Activated T-helper 1 cell treated with anti-CD3 and anti-CD28 coated beads, Interleukin-12 subunit alpha, Interleukin-12 subunit beta, Interleukin-2, Interleukin-4 antibody, amounts not matched to agents 30 ng/mL and 10 ng/mL and 1 ng/mL, durations not matched to agents 14 hours and 24 hours and 36 hours (primary cell): ENCODE measurements at regions of chr5 and their contacts with region 1.

Region 1: GRCh38 chr5:112976432-112977309 is at the start of gene DCP2:
- DNase-seq: peak; percentile 96
- H3K4me3 Mint-ChIP-seq: peak within 1 kb of the TSS; percentile 93
- H3K27ac Mint-ChIP-seq: peak within 1 kb of the TSS; percentile 93
- H3K4me1 Mint-ChIP-seq: peaks cover 32% of the 10 kb centered on the region
- H3K27me3 Mint-ChIP-seq: no peaks in the 10 kb centered on the region
- total RNA-seq, gene DCP2: 78.9 and 82.5 TPM in 2 replicates

Region 2: GRCh38 chr5:112860929-112861637 is 115.6 kb before region 1 on chr5 and contains the start of gene SRP19:
- intact Hi-C with region 1: loop called (anchors 1 kb)
- DNase-seq: peak; percentile 89
- H3K4me3 Mint-ChIP-seq: peak within 1 kb of the TSS; percentile 97
- H3K27ac Mint-ChIP-seq: peak within 1 kb of the TSS; percentile 96
- H3K4me1 Mint-ChIP-seq: peaks cover 27% of the 10 kb centered on the region
- H3K27me3 Mint-ChIP-seq: peaks cover 12% of the 10 kb centered on the region
- total RNA-seq, gene SRP19: 72.0 and 72.5 TPM in 2 replicates

Region 3: DNA sequence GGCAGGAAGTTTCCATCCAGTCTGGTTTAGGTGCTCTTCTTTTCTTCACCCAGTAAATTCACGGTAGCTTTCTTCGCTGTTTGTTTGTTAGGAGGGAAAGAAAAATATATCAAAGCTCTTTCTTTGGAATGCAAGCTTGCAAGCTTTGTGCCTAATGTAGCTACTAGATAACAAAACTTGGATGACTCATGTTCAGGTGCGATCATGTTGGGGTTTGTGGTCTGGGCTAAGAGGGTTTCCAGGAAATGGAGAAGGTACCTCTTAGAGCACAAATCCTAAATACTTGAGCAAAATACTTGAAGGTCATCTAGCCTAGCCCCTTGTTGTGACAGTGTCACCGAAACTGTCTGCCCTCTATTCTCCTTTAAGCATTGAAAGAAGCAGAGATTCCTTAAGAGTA is 97.9 kb before region 1 on chr5:
- intact Hi-C with region 1: loop called (anchors 2 kb)
- DNase-seq: peak; percentile 62
- H3K4me3 Mint-ChIP-seq: peak overlapping the region; percentile 31
- H3K27ac Mint-ChIP-seq: peak overlapping the region; percentile 54
- H3K4me1 Mint-ChIP-seq: peaks cover 42% of the 10 kb centered on the region
- H3K27me3 Mint-ChIP-seq: no peaks in the 10 kb centered on the region

Region 4: GRCh38 chr5:113022661-113023060 is 46.0 kb after region 1 on chr5:
- intact Hi-C with region 1: loop called (anchors 1 kb)
- DNase-seq: peak; percentile 27
- H3K4me3 Mint-ChIP-seq: peak overlapping the region; percentile 43
- H3K27ac Mint-ChIP-seq: peak overlapping the region; percentile 61
- H3K4me1 Mint-ChIP-seq: peaks cover 62% of the 10 kb centered on the region
- H3K27me3 Mint-ChIP-seq: no peaks in the 10 kb centered on the region

Region 5: DNA sequence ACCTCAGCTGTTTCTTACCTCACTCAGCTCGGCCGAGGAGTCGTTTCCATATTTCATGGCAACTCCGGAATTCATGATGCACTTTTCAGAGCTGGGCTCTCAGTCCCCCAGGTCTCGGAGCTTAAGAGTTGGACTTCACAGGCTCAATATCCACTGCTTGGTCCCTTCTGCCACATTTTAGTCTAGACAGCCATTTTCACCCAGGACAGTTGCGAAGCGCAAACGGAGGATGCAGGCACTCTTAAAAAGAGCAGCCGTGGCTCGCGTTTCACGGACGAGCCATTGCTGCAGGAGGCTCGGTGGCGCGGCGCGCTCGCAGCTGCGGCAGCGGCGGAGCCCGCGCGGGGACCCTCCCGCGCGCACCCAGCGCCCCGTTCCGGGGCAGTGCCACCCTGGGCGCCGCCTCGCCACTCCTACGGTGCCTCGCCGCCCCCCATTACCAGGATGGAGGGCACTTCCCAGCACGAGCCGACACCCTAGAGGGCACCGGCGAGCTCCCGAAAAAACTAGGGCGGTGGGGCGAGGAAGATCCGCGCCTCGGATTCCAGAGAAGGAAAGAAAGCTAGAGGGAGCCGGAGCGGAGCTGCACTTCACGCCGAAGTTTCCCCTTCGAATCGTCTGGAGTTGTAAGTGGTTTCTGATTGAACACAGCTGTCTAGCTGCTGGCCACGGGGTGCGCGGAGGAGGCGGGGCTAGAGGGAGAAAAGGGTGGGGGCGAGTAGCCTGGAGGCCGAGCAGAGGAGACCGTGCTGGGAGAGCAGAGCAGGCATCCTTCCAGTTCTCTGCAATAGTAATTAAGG is 317.8 kb after region 1 on chr5:
- intact Hi-C with region 1: loop called (anchors 5 kb)
- DNase-seq: peak; percentile 62
- H3K4me3 Mint-ChIP-seq: peak overlapping the region; percentile 89
- H3K27ac Mint-ChIP-seq: peak overlapping the region; percentile 8
- H3K4me1 Mint-ChIP-seq: peaks cover 18% of the 10 kb centered on the region
- H3K27me3 Mint-ChIP-seq: peaks cover 69% of the 10 kb centered on the region